Activated CD8-positive, alpha-beta memory T cell treated with anti-CD3 and anti-CD28 coated beads, Interleukin-2, amount 10 ng/mL, durations not matched to agents 7 days and 5 days (primary cell): ENCODE measurements at regions of chr17 and their contacts with region 1.

Region 1: DNA sequence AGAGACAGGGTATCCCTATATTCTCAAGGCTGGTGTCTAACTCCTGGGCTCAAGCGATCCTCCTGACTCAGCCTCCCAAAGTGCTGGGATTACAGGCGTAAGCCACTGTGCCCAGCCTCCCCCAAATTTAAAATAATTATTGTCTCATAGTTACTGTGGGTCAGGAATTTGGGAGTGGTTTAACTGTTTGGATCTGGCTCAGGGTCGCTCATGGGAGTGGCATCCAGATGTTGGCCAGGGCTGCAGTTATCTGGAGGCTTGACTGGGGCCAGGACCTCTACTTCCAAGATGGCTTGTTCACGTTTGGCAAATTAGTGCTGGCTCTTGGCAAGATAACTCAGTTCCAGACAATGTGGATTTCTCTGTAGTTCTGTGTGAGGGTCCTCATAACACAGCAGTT is 8.0 kb downstream of the TEN1 start:
- DNase-seq: no peak
- ATAC-seq: no peak
- H3K4me3 Mint-ChIP-seq: no peak overlapping the region
- H3K27ac Mint-ChIP-seq: no peak overlapping the region
- H3K4me1 Mint-ChIP-seq: peaks cover 3% of the 10 kb centered on the region
- H3K27me3 Mint-ChIP-seq: no peaks in the 10 kb centered on the region

Region 2: DNA sequence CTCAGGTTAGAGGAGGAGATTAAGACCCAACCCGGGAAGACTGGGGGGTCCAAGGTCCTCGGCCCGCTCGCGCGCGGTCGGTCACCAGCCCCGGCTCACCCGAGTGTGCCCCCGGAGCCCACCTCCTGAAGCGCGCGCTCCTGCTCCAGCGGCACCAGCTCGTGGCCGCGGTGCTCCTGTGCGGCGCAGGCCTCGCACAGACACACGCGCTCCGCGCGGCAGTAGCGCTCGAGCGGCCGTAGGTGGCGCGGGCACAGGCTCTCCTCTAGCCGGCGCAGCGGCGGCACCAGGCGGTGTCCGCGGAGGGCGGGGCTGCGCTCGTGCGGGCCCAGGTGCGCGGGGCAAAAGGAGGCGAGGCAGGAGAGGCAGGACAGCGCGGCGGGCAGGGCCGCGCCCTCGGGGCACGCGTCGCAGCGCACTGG is 109.2 kb before region 1 on chr17:
- CTCF ChIA-PET with region 1: no interaction called
- DNase-seq: peak; percentile 82
- ATAC-seq: peak; percentile 82
- H3K4me3 Mint-ChIP-seq: peak overlapping the region; percentile 88
- H3K27ac Mint-ChIP-seq: peak overlapping the region; percentile 91
- H3K4me1 Mint-ChIP-seq: peaks cover 37% of the 10 kb centered on the region
- H3K27me3 Mint-ChIP-seq: peaks cover 28% of the 10 kb centered on the region

Region 3: DNA sequence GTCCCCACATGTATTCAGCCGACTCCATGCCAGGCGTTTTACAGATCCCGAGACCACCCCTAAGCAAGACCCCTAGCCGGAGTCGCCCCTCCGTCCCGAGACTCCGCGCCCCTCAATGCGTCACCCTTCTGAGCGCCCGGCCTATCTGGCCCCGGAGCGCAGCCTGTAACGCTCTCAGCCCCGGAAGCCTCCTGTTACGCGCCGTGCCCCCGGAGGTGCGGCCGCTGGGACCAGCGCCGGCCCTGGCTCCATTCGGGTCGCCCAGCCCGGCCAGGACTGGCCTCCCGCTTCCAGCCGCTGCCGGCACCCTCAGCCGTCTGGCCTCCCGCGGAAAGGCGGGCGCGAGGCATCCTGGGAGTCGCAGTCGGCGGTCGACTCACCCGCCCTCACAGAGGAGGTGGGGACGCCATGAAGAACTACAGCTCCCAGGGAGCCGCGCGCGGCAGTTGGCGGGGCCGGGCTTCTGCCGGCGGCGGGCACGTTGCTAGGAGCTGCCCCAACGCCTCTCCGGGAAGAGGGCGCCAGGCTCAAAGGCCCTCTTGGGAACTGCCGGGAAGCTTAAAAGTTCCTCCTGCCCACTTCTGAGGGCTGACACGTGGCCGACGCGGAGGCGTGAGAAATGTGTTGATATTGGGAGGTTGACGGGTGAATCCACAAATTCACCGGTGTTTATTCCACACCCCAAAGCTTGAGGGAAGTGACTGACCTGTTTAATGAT is 46.1 kb before region 1 on chr17 and contains the start of gene FBF1:
- CTCF ChIA-PET with region 1: no interaction called
- DNase-seq: peak; percentile 94
- ATAC-seq: peak; percentile 99
- H3K4me3 Mint-ChIP-seq: peak within 1 kb of the TSS; percentile 86
- H3K27ac Mint-ChIP-seq: peak within 1 kb of the TSS; percentile 78
- H3K4me1 Mint-ChIP-seq: peaks cover 16% of the 10 kb centered on the region
- H3K27me3 Mint-ChIP-seq: no peaks in the 10 kb centered on the region
- total RNA-seq, gene FBF1: 26.6 to 36.7 TPM

Region 4: GRCh38 chr17:76000016-76000754 is 13.2 kb after region 1 on chr17:
- CTCF ChIA-PET with region 1: interaction called, 12 read pairs
- DNase-seq: peak; percentile 75
- ATAC-seq: peak; percentile 77
- H3K4me3 Mint-ChIP-seq: no peak overlapping the region
- H3K27ac Mint-ChIP-seq: no peak overlapping the region
- H3K4me1 Mint-ChIP-seq: peaks cover 14% of the 10 kb centered on the region
- H3K27me3 Mint-ChIP-seq: no peaks in the 10 kb centered on the region

Region 5: GRCh38 chr17:76005263-76006149 is 18.5 kb after region 1 on chr17:
- CTCF ChIA-PET with region 1: interaction called, 11 read pairs
- DNase-seq: peak; percentile 88
- ATAC-seq: peak; percentile 75
- H3K4me3 Mint-ChIP-seq: no peak overlapping the region
- H3K27ac Mint-ChIP-seq: peak overlapping the region; percentile 14
- H3K4me1 Mint-ChIP-seq: no peaks in the 10 kb centered on the region
- H3K27me3 Mint-ChIP-seq: no peaks in the 10 kb centered on the region